GM12878 (cell line): ENCODE measurements at regions of chr13 and their contacts with region 1.

Region 1: GRCh38 chr13:31538067-31539042 is 201.0 kb upstream of the RXFP2 start:
- DNase-seq: no peak
- ATAC-seq: no peak
- H3K4me3 ChIP-seq: no peak overlapping the region
- H3K27ac ChIP-seq: no peak overlapping the region
- H3K4me1 ChIP-seq: no peaks in the 10 kb centered on the region
- H3K27me3 ChIP-seq: no peaks in the 10 kb centered on the region
- CTCF ChIP-seq: peak in 1 of 3 experiments; percentile 13; a peak in 1 of 6 replicates
- EP300 ChIP-seq: no peak
- POLR2A ChIP-seq: no peak
- RAD21 ChIP-seq: no peak

Region 2: DNA sequence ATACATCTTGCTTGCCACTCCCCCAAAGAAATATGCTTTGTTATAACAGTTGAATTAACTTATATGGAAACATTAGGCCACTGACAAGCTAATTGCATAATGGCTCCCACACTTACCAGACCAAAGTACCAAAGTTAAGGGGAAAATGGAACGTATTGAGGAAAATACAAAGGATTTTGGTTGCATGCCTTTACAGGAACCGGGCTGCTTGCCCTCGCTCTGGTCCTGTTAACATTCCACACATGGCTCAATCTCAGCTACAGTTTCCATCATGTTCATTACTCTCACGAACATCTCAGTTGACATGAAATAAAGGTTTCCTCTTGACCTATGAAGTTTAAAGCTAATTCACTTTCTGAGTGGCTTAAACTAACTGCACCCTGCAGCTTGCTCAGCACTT is 19.7 kb before region 1 on chr13:
- CTCF ChIA-PET with region 1: no interaction called
- POLR2A ChIA-PET with region 1: no interaction called
- RAD21 ChIA-PET with region 1: no interaction called
- SMC1A ChIA-PET with region 1: no interaction called
- in situ Hi-C with region 1: no loop called
- intact Hi-C with region 1: no loop called
- DNase-seq: no peak
- ATAC-seq: no peak
- H3K4me3 ChIP-seq: no peak overlapping the region
- H3K27ac ChIP-seq: no peak overlapping the region
- H3K4me1 ChIP-seq: no peaks in the 10 kb centered on the region
- H3K27me3 ChIP-seq: no peaks in the 10 kb centered on the region
- CTCF ChIP-seq: no peak
- EP300 ChIP-seq: no peak
- POLR2A ChIP-seq: no peak
- RAD21 ChIP-seq: no peak

Region 3: GRCh38 chr13:31742097-31742734 is 203.9 kb after region 1 on chr13:
- CTCF ChIA-PET with region 1: interaction called, 9 read pairs
- POLR2A ChIA-PET with region 1: no interaction called
- RAD21 ChIA-PET with region 1: no interaction called
- SMC1A ChIA-PET with region 1: no interaction called
- in situ Hi-C with region 1: no loop called
- intact Hi-C with region 1: loop called (anchors 5 kb)
- DNase-seq: peak; percentile 8
- ATAC-seq: peak; percentile 96
- H3K4me3 ChIP-seq: no peak overlapping the region
- H3K27ac ChIP-seq: no peak overlapping the region
- H3K4me1 ChIP-seq: no peaks in the 10 kb centered on the region
- H3K27me3 ChIP-seq: no peaks in the 10 kb centered on the region; a peak in 1 of 4 replicates
- CTCF ChIP-seq: peak; percentile 92 to 95 (median 93)
- EP300 ChIP-seq: no peak
- POLR2A ChIP-seq: no peak
- RAD21 ChIP-seq: peak; percentile 86